Panc1 (cell line): ENCODE measurements at regions of chr10 and their contacts with region 1.

Region 1: DNA sequence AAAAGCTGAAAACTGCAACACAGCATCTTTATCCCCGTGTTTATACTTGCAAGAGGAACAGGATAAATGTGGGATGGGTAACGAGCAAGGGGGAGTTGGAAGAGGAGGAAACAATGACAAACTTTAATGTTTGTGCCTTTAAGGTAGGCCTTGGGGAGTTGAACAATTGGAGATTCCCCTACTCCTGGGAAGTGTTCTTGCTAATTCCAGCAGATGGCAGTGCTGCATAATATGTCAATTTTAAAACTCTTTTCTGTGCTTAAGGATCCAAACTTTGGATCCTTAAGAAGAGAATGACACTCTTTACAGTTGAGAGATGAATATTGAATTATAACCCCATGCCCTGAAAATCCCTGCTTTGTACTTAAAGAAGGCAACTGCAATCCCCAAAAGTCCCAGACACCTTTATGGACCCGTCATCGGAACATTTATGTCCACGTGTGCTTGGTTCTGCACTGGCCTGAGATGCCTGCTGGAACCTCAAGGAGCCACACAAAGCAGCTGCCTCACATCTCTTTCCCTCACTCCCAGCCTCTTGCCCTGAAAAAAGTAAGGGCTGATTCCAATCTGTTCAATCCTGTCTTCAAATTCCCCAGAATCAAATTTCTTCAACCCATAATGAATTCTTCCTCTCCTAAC is 12.0 kb downstream of the IFIT5 start:
- DNase-seq: peak; percentile 47
- ATAC-seq: peak; percentile 87
- H3K4me3 ChIP-seq: no peak overlapping the region
- H3K27ac ChIP-seq: no peak overlapping the region
- H3K4me1 ChIP-seq: no peaks in the 10 kb centered on the region
- H3K27me3 ChIP-seq: no peaks in the 10 kb centered on the region
- CTCF ChIP-seq: peak; percentile 87

Region 2: DNA sequence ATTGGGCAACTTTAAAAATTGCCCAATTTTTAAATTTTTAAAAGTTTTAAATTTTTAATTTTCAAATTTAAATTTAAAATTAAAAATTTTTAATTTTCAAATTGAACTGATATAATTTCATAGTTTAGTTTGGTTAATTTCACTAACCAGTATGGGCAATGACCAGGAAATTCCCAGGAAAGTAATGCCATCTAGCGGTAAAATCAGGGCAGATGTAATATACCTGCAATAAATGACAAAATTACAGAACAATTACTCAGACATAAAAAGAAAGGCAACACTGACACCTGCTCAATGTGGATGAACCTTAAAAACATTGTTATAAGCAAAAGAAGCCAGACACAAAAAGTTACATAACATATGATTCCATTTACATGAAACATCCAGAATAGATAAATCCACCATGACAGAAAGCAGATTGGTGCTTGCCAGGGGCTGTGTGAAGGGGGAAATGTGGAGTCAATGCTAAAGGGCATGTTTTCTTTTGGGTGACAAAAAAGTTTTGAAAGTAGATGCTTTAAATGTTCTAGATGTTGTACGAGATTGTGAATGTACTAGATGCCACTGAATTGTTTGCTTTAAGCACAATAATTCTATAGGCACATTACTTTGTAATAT is 137.6 kb after region 1 on chr10:
- CTCF ChIA-PET with region 1: no interaction called
- POLR2A ChIA-PET with region 1: no interaction called
- in situ Hi-C with region 1: no loop called
- intact Hi-C with region 1: loop called (anchors 1 kb)
- DNase-seq: peak; percentile 48
- ATAC-seq: peak; percentile 88
- H3K4me3 ChIP-seq: no peak overlapping the region
- H3K27ac ChIP-seq: no peak overlapping the region
- H3K4me1 ChIP-seq: no peaks in the 10 kb centered on the region
- H3K27me3 ChIP-seq: no peaks in the 10 kb centered on the region; the same call in 1 of the 2 replicates
- CTCF ChIP-seq: peak; percentile 78; the same call in 1 of the 2 replicates